ENCODE measurements at regions of chr2 and their contacts with region 1.

Region 1: GRCh38 chr2:176140513-176141317 is 10.6 kb upstream of the HOXD4 start:
- DNase-seq: peak; percentile 63 to 84 (median 80)
- H3K4me3 ChIP-seq: peak overlapping the region in 2 of 4 donors; percentile 38 to 96
- H3K27ac ChIP-seq: peak overlapping the region; percentile 12 to 97 (median 78)
- H3K4me1 ChIP-seq: peaks cover 20 to 32% of the 10 kb centered on the region in 2 donors
- H3K27me3 ChIP-seq: no peaks in the 10 kb centered on the region
- CTCF ChIP-seq: peak; percentile 89 to 99 (median 95)
- POLR2A ChIP-seq: no peak

Region 2: GRCh38 chr2:176454893-176455811 is 314.4 kb after region 1 on chr2:
- intact Hi-C with region 1: loop called (anchors 5 kb)
- DNase-seq: peak; percentile 63 to 97 (median 87)
- H3K4me3 ChIP-seq: no peak overlapping the region
- H3K27ac ChIP-seq: peak overlapping the region in 1 of 5 donors; percentile 45
- H3K4me1 ChIP-seq: no peaks in the 10 kb centered on the region
- H3K27me3 ChIP-seq: no peaks in the 10 kb centered on the region
- CTCF ChIP-seq: peak; percentile 80 to 98 (median 88)
- POLR2A ChIP-seq: no peak

Region 3: GRCh38 chr2:176554101-176555048 is 413.7 kb after region 1 on chr2:
- intact Hi-C with region 1: loop called (anchors 2 to 5 kb)
- DNase-seq: peak; percentile 27 to 76 (median 44)
- H3K4me3 ChIP-seq: peak overlapping the region in 2 of 4 donors; percentile 27 to 57
- H3K27ac ChIP-seq: peak overlapping the region in 4 of 5 donors; percentile 44 to 83 (median 78)
- H3K4me1 ChIP-seq: peaks cover 0 to 22% of the 10 kb centered on the region in 2 donors
- H3K27me3 ChIP-seq: no peaks in the 10 kb centered on the region
- CTCF ChIP-seq: peak; percentile 76 to 97 (median 88)
- POLR2A ChIP-seq: peak in 1 of 2 donors; percentile 2

Region 4: GRCh38 chr2:176638167-176639015 is 497.7 kb after region 1 on chr2:
- intact Hi-C with region 1: loop called in 1 of 2 experiments (anchors 5 kb)
- DNase-seq: peak; percentile 67 to 88 (median 74)
- H3K4me3 ChIP-seq: peak overlapping the region in 2 of 4 donors; percentile 64 to 69
- H3K27ac ChIP-seq: peak overlapping the region in 2 of 5 donors; percentile 73 to 80
- H3K4me1 ChIP-seq: peaks cover 0 to 4% of the 10 kb centered on the region in 2 donors
- H3K27me3 ChIP-seq: no peaks in the 10 kb centered on the region
- CTCF ChIP-seq: peak; percentile 30 to 89 (median 63)
- POLR2A ChIP-seq: no peak

Measured in adrenal gland (tissue), 19 donors.